SK-MEL-5 (cell line): ENCODE measurements at regions of chr2 and their contacts with region 1.

Region 1: DNA sequence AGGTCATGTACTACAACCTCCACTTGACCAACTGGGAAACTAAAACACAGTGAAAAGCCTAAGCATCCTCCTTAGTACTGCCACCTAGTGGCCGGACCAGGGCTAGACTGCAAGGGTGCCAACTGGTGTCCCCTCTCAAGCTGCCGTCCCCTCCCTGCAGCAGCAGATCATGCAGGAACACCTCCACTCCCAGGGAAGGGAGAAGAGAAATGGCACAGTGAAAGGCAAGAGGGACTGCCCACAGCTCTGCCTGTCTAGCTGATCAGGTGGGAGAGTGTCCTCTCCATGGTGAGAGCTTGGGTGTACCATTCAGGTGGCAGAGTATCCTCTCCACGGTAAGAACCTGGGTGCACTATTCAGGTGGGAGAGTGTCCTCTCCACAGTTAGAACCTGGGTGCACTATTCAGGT is 78.1 kb downstream of the AAK1 start:
- DNase-seq: peak; percentile 83

Region 2: GRCh38 chr2:69816923-69817542 is 251.6 kb after region 1 on chr2:
- in situ Hi-C with region 1: loop called (anchors 25 kb)
- DNase-seq: peak; percentile 92